A673 (cell line): ENCODE measurements at regions of chr16 and their contacts with region 1.

Region 1: GRCh38 chr16:24253192-24253591 is 2.9 kb upstream of the CACNG3 start:
- DNase-seq: peak; percentile 83
- H3K4me3 ChIP-seq: no peak overlapping the region
- H3K27ac ChIP-seq: no peak overlapping the region
- H3K4me1 ChIP-seq: peaks cover 19% of the 10 kb centered on the region
- H3K27me3 ChIP-seq: peaks cover 7% of the 10 kb centered on the region
- CTCF ChIP-seq: peak; percentile 80

Region 2: GRCh38 chr16:23729503-23730424 is 523.4 kb before region 1 on chr16:
- CTCF ChIA-PET with region 1: no interaction called
- POLR2A ChIA-PET with region 1: no interaction called
- intact Hi-C with region 1: loop called (anchors 10 kb)
- DNase-seq: peak; percentile 79
- H3K4me3 ChIP-seq: no peak overlapping the region
- H3K27ac ChIP-seq: peak overlapping the region; percentile 40
- H3K4me1 ChIP-seq: peaks cover 12% of the 10 kb centered on the region
- H3K27me3 ChIP-seq: no peaks in the 10 kb centered on the region
- CTCF ChIP-seq: no peak

Region 3: GRCh38 chr16:24070851-24071250 is 182.3 kb before region 1 on chr16:
- CTCF ChIA-PET with region 1: interaction called, 31 read pairs
- POLR2A ChIA-PET with region 1: no interaction called
- intact Hi-C with region 1: loop called (anchors 2 kb)
- DNase-seq: peak; percentile 89
- H3K4me3 ChIP-seq: no peak overlapping the region
- H3K27ac ChIP-seq: no peak overlapping the region
- H3K4me1 ChIP-seq: peaks cover 8% of the 10 kb centered on the region
- H3K27me3 ChIP-seq: no peaks in the 10 kb centered on the region
- CTCF ChIP-seq: peak; percentile 83

Region 4: GRCh38 chr16:24139282-24139681 is 113.9 kb before region 1 on chr16:
- CTCF ChIA-PET with region 1: no interaction called
- POLR2A ChIA-PET with region 1: no interaction called
- intact Hi-C with region 1: no loop called
- DNase-seq: no peak
- H3K4me3 ChIP-seq: no peak overlapping the region
- H3K27ac ChIP-seq: no peak overlapping the region
- H3K4me1 ChIP-seq: peaks cover 18% of the 10 kb centered on the region
- H3K27me3 ChIP-seq: no peaks in the 10 kb centered on the region
- CTCF ChIP-seq: no peak

Region 5: GRCh38 chr16:24208710-24209109 is 44.5 kb before region 1 on chr16:
- CTCF ChIA-PET with region 1: interaction called, 13 read pairs
- POLR2A ChIA-PET with region 1: no interaction called
- intact Hi-C with region 1: no loop called
- DNase-seq: peak; percentile 84
- H3K4me3 ChIP-seq: no peak overlapping the region
- H3K27ac ChIP-seq: peak overlapping the region; percentile 43
- H3K4me1 ChIP-seq: peaks cover 21% of the 10 kb centered on the region
- H3K27me3 ChIP-seq: no peaks in the 10 kb centered on the region
- CTCF ChIP-seq: no peak

Region 6: GRCh38 chr16:24273473-24274182 is 20.4 kb after region 1 on chr16:
- CTCF ChIA-PET with region 1: no interaction called
- POLR2A ChIA-PET with region 1: no interaction called
- intact Hi-C with region 1: no loop called
- DNase-seq: peak; percentile 35
- H3K4me3 ChIP-seq: no peak overlapping the region
- H3K27ac ChIP-seq: peak overlapping the region; percentile 14
- H3K4me1 ChIP-seq: peaks cover 15% of the 10 kb centered on the region
- H3K27me3 ChIP-seq: no peaks in the 10 kb centered on the region
- CTCF ChIP-seq: no peak

Region 7: GRCh38 chr16:24499193-24499814 is 246.1 kb after region 1 on chr16:
- CTCF ChIA-PET with region 1: interaction called, 7 read pairs
- POLR2A ChIA-PET with region 1: no interaction called
- intact Hi-C with region 1: loop called (anchors 2 kb)
- DNase-seq: peak; percentile 95
- H3K4me3 ChIP-seq: no peak overlapping the region
- H3K27ac ChIP-seq: peak overlapping the region; percentile 85
- H3K4me1 ChIP-seq: peaks cover 54% of the 10 kb centered on the region
- H3K27me3 ChIP-seq: no peaks in the 10 kb centered on the region
- CTCF ChIP-seq: peak; percentile 92